ENCODE measurements at regions of chr18 and their contacts with region 1.

Region 1: DNA sequence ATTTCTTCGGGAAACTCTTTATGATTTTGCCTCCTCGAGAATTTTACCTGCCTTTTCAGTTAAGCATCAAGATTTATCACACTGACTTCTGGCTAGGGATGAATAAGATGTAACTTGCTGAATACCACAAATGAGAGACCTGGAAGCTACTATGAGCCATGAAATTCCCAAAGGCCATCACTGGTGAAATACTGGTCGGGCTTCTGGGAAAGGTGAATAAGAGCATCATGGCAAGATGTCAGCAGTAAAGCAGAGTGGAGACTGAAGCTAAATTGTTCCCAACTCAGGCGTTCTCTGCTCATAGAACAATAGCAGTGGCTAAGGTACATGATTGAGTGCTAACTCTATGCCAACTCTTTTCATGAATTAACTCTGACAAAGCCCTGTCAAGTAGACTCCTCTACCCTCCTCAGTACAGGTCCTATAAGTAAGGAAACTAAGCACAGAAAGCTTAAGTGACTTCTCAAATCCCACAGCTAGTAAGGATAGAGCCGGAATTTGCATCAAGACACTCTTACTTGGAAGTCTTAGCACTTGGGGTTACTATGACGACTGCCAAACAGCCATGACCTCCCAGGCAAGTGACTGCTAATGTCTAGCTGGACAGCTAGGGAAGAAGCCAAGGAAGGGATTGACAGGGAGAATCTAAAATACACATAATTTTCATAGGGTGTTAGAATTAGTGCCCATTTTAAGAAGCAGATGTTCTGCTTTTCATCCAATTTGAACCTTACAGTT is 22.7 kb upstream of the DSC3 start:
- DNase-seq: no peak
- H3K4me3 ChIP-seq: no peak overlapping the region
- H3K27ac ChIP-seq: peak overlapping the region in 1 of 2 donors; percentile 27
- H3K4me1 ChIP-seq: no peaks in the 10 kb centered on the region
- H3K27me3 ChIP-seq: no peaks in the 10 kb centered on the region
- CTCF ChIP-seq: no peak
- POLR2A ChIP-seq: no peak

Region 2: DNA sequence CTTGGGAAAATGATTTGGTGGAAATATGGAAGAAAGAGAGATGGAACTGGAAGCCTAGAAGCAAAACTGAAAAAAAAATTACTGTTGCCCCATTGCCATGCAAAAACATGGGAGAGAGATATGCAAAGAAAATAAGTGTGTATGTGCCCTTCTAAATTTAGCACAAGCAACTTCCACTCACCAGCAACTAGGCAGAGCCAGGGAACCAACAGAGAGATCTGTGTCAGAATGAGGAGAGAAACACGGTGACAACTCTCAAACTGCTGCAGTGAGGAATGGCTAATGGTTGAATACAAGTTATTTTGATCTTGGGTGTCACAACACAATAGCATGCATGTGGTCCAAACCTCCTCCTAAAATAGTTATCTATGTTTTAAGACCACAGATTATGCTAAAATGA is 26.1 kb after region 1 on chr18:
- intact Hi-C with region 1: no loop called
- DNase-seq: no peak
- H3K4me3 ChIP-seq: no peak overlapping the region
- H3K27ac ChIP-seq: no peak overlapping the region
- H3K4me1 ChIP-seq: no peaks in the 10 kb centered on the region
- H3K27me3 ChIP-seq: no peaks in the 10 kb centered on the region
- CTCF ChIP-seq: no peak
- POLR2A ChIP-seq: no peak

Region 3: GRCh38 chr18:31329787-31330438 is 264.7 kb after region 1 on chr18:
- intact Hi-C with region 1: loop called (anchors 5 kb)
- DNase-seq: no peak
- H3K4me3 ChIP-seq: no peak overlapping the region
- H3K27ac ChIP-seq: no peak overlapping the region
- H3K4me1 ChIP-seq: no peaks in the 10 kb centered on the region
- H3K27me3 ChIP-seq: no peaks in the 10 kb centered on the region
- CTCF ChIP-seq: no peak
- POLR2A ChIP-seq: no peak

Measured in breast epithelium (tissue), 4 donors.